Activated naive CD4-positive, alpha-beta T cell treated with anti-CD3 and anti-CD28 coated beads for 36 hours (primary cell): ENCODE measurements at regions of chr6 and their contacts with region 1.

Region 1: DNA sequence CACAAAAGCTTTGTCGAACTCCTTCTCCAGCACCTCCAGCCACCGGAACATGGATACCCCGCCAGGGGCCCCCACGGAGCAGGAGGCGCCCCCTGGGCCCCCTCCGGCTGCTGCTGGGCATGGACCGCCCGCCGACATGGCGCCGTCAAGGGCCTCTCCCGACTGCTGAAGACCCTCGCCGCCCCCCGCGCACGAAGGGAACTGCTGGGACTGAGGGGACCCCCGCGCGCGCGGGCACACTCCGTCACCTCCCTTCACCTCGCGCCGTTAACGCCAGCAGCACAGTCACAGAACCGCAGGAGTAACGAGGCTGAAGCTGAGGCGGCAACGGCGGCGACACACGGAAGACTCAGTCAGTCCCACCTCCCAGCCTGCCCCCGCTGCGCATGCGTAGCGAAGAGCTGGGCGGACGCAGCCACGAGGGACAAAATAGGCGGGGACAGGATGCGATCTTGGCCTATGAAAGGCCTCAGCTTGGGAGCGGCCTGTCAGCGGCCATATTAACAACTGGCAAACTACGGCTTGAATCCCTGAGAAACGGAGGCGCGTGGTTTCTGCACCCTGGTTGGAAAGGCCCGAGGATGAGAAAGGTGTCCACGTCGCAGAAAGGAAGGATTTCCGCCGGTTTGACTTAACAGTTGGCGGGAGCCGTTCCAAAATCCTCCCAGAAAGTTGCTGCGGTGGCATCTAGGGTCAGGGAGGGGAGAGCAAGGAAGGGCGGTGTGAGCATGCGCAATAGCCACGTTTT is at the start of gene GOPC:
- DNase-seq: peak; percentile 96
- H3K4me3 Mint-ChIP-seq: peak within 1 kb of the TSS; percentile 99
- H3K27ac Mint-ChIP-seq: peak within 1 kb of the TSS; percentile 98
- H3K4me1 Mint-ChIP-seq: peaks cover 33% of the 10 kb centered on the region
- H3K27me3 Mint-ChIP-seq: no peaks in the 10 kb centered on the region
- total RNA-seq, gene GOPC: 7.2 to 7.5 TPM

Region 2: DNA sequence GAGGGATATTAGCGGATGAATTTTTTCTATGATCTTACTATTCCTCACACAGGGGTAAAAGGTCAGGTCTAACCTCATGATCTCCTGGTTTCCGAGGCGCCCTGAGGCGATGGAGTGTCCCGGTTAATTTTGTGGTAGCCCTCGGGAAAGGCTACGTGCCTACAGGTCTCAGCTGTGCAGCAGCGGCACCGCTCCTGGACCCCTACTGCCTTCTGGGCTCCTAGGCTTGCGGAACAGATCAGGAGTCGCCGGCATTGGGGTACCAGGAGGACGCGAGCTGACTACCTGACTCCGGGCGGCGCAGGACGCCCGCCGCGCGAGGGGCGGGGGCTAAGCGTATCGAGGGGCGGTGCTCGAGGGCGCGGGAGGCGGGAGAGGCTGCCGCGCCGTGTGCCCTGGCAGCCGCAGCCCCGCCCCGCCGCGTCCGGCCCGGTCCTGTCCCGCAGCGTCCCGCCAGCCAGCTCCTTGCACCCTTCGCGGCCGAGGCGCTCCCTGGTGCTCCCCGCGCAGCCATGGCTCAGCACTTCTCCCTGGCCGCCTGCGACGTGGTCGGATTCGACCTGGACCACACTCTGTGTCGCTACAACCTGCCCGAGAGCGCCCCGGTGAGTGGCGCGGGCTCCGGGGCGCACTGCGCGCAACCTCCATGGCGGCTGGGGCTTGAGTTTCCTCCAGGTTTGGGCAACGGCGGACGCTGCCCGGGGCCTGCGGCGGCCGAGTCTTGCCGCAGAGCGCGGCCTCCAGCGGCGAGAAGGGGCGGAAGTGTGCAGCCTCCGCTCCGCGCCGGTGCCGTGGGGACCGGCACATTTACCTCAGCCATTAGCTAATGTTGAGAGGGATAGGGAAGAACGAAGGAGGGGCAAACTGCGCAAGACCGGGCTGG is 1501.7 kb before region 1 on chr6 and contains the start of gene NT5DC1:
- CTCF ChIA-PET with region 1: no interaction called
- intact Hi-C with region 1: loop called (anchors 2 kb)
- DNase-seq: peak; percentile 87
- H3K4me3 Mint-ChIP-seq: peak within 1 kb of the TSS; percentile 90
- H3K27ac Mint-ChIP-seq: peak within 1 kb of the TSS; percentile 81
- H3K4me1 Mint-ChIP-seq: peaks cover 43% of the 10 kb centered on the region
- H3K27me3 Mint-ChIP-seq: no peaks in the 10 kb centered on the region
- total RNA-seq, gene NT5DC1: 59.7 to 62.6 TPM

Region 3: GRCh38 chr6:116667623-116668022 is 934.7 kb before region 1 on chr6:
- CTCF ChIA-PET with region 1: no interaction called
- intact Hi-C with region 1: loop called (anchors 2 kb)
- DNase-seq: no peak
- H3K4me3 Mint-ChIP-seq: peak overlapping the region; percentile 99
- H3K27ac Mint-ChIP-seq: peak overlapping the region; percentile 12
- H3K4me1 Mint-ChIP-seq: peaks cover 35% of the 10 kb centered on the region
- H3K27me3 Mint-ChIP-seq: no peaks in the 10 kb centered on the region

Region 4: GRCh38 chr6:116726947-116727346 is 875.4 kb before region 1 on chr6:
- CTCF ChIA-PET with region 1: no interaction called
- intact Hi-C with region 1: no loop called
- DNase-seq: no peak
- H3K4me3 Mint-ChIP-seq: no peak overlapping the region
- H3K27ac Mint-ChIP-seq: no peak overlapping the region
- H3K4me1 Mint-ChIP-seq: no peaks in the 10 kb centered on the region
- H3K27me3 Mint-ChIP-seq: no peaks in the 10 kb centered on the region

Region 5: DNA sequence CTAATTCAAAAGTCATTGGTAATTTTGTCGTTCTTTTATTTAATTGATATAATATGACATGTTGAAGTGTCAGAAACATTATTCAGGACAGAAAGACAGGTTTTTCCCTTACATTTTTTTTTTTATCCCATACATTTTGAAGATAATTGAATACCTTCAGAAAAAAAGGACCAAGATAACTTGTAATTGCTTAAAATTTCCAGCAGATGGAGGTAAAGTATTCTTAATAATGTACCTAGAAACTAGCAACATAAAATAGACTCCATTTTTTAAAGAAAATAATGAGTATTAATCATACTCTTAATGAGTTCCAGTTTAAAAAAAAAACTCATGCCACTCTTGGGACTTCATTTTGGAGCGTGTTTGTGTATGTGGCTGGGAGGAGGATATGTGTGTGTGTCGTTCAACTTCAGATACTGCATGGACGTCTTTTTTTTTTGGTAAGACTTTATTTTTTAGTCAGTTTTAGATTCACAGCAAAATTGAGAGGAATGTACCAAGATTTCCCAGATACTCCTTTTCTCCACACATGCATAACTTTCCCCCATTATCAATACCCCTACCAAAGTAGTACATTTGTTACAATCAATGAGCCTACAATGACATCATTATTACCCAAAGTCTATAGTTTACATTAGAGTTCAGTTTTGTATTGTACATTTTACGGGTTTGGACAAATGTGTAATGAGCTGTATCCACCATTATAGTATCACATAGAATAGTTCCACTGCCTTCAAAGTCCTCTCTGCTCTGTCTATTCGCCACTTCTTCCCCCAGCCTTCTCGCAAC is 256.0 kb before region 1 on chr6:
- CTCF ChIA-PET with region 1: interaction called, 3 read pairs
- intact Hi-C with region 1: loop called (anchors 1 kb)
- DNase-seq: no peak
- H3K4me3 Mint-ChIP-seq: no peak overlapping the region
- H3K27ac Mint-ChIP-seq: no peak overlapping the region
- H3K4me1 Mint-ChIP-seq: no peaks in the 10 kb centered on the region
- H3K27me3 Mint-ChIP-seq: peaks cover 3% of the 10 kb centered on the region

Region 6: DNA sequence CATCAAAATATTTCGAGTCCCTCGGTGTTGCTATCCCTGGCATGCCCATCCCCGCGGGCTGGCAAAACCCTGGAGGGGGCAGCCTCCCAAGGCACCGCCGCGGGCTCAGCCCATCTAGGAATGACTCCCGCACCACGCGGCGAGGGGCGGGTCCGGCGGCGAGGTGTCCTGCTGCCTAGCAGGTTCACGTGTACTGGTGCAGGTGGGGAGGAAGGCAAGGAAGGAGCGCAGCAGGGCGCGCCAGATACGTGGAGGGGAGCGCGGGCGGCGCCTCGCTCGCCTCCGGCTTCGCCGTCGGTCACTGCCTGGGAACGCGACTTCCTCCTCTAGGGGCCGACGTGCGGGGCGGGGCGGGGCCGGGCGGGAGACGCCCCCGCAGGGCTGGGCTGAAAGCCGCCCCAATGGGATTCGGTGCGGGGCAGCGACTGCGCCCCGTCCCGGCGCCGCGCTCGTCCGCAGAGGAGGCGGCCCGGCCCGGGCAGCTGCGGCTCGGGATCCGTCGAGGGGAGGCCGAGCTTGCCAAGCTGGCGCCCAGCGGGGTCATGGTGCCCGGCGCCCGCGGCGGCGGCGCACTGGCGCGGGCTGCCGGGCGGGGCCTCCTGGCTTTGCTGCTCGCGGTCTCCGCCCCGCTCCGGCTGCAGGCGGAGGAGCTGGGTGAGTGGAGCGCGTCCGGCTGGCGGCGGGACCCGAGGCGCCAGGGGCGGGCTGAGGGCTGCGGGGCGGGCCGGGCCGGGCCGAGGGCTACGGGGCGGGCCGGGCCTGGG is 119.9 kb before region 1 on chr6 and contains the start of gene DCBLD1:
- CTCF ChIA-PET with region 1: interaction called, 3 read pairs
- intact Hi-C with region 1: loop called (anchors 1 kb)
- DNase-seq: peak; percentile 56
- H3K4me3 Mint-ChIP-seq: peak within 1 kb of the TSS; percentile 79
- H3K27ac Mint-ChIP-seq: no peak within 1 kb of the TSS
- H3K4me1 Mint-ChIP-seq: peaks cover 17% of the 10 kb centered on the region
- H3K27me3 Mint-ChIP-seq: peaks cover 42% of the 10 kb centered on the region
- total RNA-seq, gene DCBLD1: 1.1 to 1.4 TPM

Region 7: GRCh38 chr6:117585647-117586046 is 16.7 kb before region 1 on chr6:
- CTCF ChIA-PET with region 1: interaction called, 3 read pairs
- intact Hi-C with region 1: loop called (anchors 2 kb)
- DNase-seq: no peak
- H3K4me3 Mint-ChIP-seq: no peak overlapping the region
- H3K27ac Mint-ChIP-seq: no peak overlapping the region
- H3K4me1 Mint-ChIP-seq: peaks cover 23% of the 10 kb centered on the region
- H3K27me3 Mint-ChIP-seq: no peaks in the 10 kb centered on the region

Region 8: DNA sequence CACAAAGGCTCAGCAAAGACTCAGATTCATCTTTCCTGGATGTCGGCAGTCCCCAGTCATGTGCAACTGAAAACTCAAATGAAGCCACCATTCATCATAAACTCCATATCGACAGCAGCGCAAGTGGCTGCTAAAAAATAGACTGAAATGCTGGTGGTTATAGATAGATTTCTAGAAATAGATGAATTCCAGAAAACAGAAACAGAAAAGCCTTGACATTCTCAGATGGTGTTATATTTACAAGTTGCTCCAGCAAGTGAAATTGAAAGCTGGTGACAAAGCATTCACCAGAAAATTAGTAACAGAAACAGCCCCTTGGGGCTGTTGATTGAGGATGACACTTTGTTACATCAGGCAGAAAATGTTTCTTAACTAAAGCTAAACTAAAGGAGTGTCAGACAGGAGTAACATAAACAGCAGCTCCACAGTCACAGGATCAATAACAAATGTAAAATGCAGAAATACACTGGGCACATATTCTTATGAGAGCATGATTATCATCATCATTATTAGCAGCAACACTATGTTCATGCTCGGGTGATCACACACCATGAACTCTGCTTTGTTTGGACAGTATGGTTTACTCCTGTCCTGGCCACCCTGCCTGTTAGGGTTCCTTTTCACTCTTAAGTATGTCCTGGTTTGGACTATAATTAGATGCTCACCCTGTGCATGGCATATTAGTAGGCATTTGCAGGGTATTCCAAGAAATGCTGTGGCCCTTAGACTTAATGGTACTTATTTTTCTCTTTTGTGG is 268.3 kb after region 1 on chr6:
- CTCF ChIA-PET with region 1: no interaction called
- intact Hi-C with region 1: no loop called
- DNase-seq: no peak
- H3K4me3 Mint-ChIP-seq: no peak overlapping the region
- H3K27ac Mint-ChIP-seq: peak overlapping the region; percentile 48
- H3K4me1 Mint-ChIP-seq: peaks cover 5% of the 10 kb centered on the region
- H3K27me3 Mint-ChIP-seq: peaks cover 13% of the 10 kb centered on the region

Region 9: GRCh38 chr6:118724211-118724610 is 1121.9 kb after region 1 on chr6:
- CTCF ChIA-PET with region 1: no interaction called
- intact Hi-C with region 1: no loop called
- DNase-seq: no peak
- H3K4me3 Mint-ChIP-seq: no peak overlapping the region
- H3K27ac Mint-ChIP-seq: peak overlapping the region; percentile 66
- H3K4me1 Mint-ChIP-seq: peaks cover 71% of the 10 kb centered on the region
- H3K27me3 Mint-ChIP-seq: no peaks in the 10 kb centered on the region

Region 10: DNA sequence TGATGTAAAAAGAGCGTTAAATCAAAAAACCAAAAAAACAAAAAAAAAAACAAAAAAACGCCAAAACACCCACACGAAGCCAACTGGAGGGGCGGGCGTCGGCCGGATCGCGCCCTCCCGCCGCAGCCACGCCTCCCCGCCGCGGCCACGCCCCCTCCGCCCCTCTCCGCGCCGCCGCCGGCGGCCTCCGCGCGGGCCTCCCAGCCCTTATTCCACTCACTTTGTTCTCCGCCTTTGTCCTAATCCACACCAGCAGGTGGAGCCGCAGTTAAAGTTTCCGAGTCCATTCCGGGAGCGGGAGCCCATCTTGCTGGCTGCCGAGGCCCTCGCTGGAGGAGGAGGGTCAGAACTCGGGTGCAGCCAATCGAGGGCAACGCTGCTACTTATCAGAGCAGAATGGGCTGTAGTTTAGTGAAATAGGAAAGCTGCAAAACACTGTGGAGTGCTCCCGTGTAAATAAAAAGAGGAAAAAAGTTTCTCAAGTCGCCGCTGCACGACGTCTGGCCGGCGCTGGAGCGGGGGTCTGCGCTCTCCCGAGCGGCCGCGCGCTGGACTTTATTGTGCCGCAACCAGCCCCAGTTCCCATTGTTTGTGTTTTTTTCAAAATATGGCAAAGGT is 1291.6 kb after region 1 on chr6 and contains the start of gene ASF1A:
- CTCF ChIA-PET with region 1: no interaction called
- intact Hi-C with region 1: loop called (anchors 5 kb)
- DNase-seq: peak; percentile 98
- H3K4me3 Mint-ChIP-seq: peak within 1 kb of the TSS; percentile 88
- H3K27ac Mint-ChIP-seq: peak within 1 kb of the TSS; percentile 97
- H3K4me1 Mint-ChIP-seq: peaks cover 50% of the 10 kb centered on the region
- H3K27me3 Mint-ChIP-seq: no peaks in the 10 kb centered on the region
- total RNA-seq, gene ASF1A: 30.3 to 31.4 TPM